ENCODE measurements at regions of chr16 and their contacts with region 1.

Region 1: DNA sequence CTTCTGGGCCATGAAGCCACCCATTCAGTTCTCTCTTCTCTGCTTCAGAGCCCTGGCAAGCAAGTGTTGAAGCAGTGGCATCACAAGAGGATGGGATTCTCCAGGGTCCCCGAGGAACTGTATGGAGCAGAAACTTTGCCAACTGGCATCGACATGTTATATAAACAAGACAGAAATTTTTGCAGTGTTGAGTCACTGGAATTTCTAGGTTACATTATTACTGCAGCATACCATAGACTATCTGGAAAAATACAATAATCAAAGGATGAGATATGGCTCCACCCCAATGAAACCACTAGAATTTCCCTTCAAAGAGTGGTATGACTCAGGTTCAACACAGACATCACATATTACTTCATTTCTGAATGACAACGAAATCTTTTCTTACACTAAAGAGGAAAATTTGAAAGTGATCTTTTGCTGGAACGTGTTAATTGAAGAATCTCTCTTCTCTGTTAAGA is 343.0 kb upstream of the DYNLRB2 start:
- DNase-seq: peak; percentile 84
- H3K4me3 Mint-ChIP-seq: no peak overlapping the region
- H3K27ac Mint-ChIP-seq: peak overlapping the region; percentile 95
- H3K4me1 Mint-ChIP-seq: peaks cover 24% of the 10 kb centered on the region
- H3K27me3 Mint-ChIP-seq: no peaks in the 10 kb centered on the region
- CTCF ChIP-seq: no peak

Region 2: GRCh38 chr16:79469999-79470398 is 727.8 kb before region 1 on chr16:
- CTCF ChIA-PET with region 1: no interaction called
- POLR2A ChIA-PET with region 1: no interaction called
- intact Hi-C with region 1: no loop called
- DNase-seq: no peak
- H3K4me3 Mint-ChIP-seq: no peak overlapping the region
- H3K27ac Mint-ChIP-seq: no peak overlapping the region
- H3K4me1 Mint-ChIP-seq: peaks cover 6% of the 10 kb centered on the region
- H3K27me3 Mint-ChIP-seq: peaks cover 28% of the 10 kb centered on the region
- CTCF ChIP-seq: no peak

Region 3: DNA sequence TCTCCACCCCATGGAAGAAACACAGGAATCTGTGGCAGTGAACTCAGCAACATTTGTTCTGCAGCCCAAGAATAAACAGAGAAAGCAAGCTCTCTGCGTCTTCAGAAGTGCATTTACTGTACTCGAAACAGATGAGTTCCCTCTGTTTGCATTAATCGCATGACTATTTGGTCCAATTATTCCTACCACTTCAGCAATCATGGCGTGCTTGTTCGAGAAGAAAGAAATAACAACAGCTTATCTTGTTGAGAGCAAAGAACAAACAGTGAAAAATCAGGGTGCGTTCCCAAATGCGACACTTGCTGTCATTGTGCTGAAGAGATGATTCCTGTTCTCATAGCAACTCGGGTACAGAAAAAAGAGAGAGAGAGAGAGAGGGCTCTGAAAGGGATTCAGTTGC is 151.9 kb before region 1 on chr16:
- CTCF ChIA-PET with region 1: no interaction called
- POLR2A ChIA-PET with region 1: no interaction called
- intact Hi-C with region 1: no loop called
- DNase-seq: no peak
- H3K4me3 Mint-ChIP-seq: no peak overlapping the region
- H3K27ac Mint-ChIP-seq: no peak overlapping the region
- H3K4me1 Mint-ChIP-seq: no peaks in the 10 kb centered on the region
- H3K27me3 Mint-ChIP-seq: peaks cover 16% of the 10 kb centered on the region
- CTCF ChIP-seq: no peak

Region 4: GRCh38 chr16:80174418-80174817 is 23.4 kb before region 1 on chr16:
- CTCF ChIA-PET with region 1: no interaction called
- POLR2A ChIA-PET with region 1: interaction called, 3 read pairs
- intact Hi-C with region 1: loop called (anchors 1 kb)
- DNase-seq: peak; percentile 58
- H3K4me3 Mint-ChIP-seq: peak overlapping the region; percentile 26
- H3K27ac Mint-ChIP-seq: peak overlapping the region; percentile 95
- H3K4me1 Mint-ChIP-seq: peaks cover 24% of the 10 kb centered on the region
- H3K27me3 Mint-ChIP-seq: no peaks in the 10 kb centered on the region
- CTCF ChIP-seq: no peak

Measured in MCF 10A (cell line).